H1 (cell line): ENCODE measurements at regions of chr19 and their contacts with region 1.

Region 1: DNA sequence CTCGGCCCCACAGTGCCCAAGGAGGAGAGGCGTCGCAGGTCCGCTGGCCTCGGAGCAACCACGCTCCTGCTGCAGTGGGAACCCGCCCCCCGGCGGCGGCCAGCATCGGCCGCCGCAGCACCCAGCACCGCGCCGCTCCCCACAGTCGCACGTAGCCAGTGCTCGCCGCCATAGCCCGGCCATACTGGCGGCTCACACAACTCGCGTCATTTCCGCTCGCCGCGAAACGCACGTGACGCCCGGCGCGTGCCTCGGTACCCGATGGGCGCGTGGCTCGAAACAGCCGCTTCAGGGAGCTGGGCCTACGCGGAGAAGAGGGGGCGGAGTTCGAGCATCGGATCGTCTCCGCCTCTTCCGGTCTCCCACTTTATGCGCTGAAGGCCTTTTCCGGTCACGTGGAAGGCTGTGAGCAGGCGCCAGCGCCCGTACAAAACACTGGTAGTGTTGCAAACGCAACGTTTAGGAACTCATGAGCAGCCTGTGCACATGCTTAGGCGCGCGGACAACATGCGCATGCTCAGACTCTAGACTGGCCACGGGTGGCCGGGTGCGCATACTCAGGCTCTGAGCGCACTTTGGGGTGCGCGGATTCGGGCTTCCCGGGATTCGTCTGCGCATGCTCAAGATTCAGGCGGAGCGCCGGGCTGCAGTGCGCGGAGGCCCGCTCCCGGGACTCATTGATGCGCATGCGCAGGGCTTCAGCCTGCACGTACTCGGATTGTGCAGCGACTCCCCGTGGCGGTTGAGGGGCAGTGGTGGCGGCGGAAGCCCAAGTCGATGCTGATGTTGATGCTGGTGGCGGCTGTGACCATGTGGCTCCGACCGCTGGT is at the starts of genes CATSPERD and LONP1:
- DNase-seq: peak; percentile 95 to 98
- H3K4me3 ChIP-seq: peak within 1 kb of the TSS; percentile 71 to 100 (median 98)
- H3K27ac ChIP-seq: peak within 1 kb of the TSS; percentile 97
- H3K4me1 ChIP-seq: no peaks in the 10 kb centered on the region; a peak in 2 of 7 replicates
- H3K27me3 ChIP-seq: no peaks in the 10 kb centered on the region
- CTCF ChIP-seq: peak; percentile 78 to 94 (median 91)
- EP300 ChIP-seq: peak in 1 of 2 experiments; percentile 59; a peak in 1 of 3 replicates
- POLR2A ChIP-seq: peak; percentile 85 to 91
- RAD21 ChIP-seq: peak in 1 of 2 experiments; percentile 33; a peak in 2 of 4 replicates
- total RNA-seq, gene CATSPERD: not detected in 2 replicates
- total RNA-seq, gene LONP1: 117 and 124 TPM in 2 replicates

Region 2: GRCh38 chr19:5622463-5623396 is 97.4 kb before region 1 on chr19 and contains the starts of genes SAFB and SAFB2:
- CTCF ChIA-PET with region 1: no interaction called
- POLR2A ChIA-PET with region 1: interaction called, 18 read pairs
- DNase-seq: peak; percentile 98 to 100
- H3K4me3 ChIP-seq: peak within 1 kb of the TSS; percentile 88 to 100 (median 98)
- H3K27ac ChIP-seq: peak within 1 kb of the TSS; percentile 97
- H3K4me1 ChIP-seq: peaks cover 2 to 14% (median 6%) of the 10 kb centered on the region in 4 experiments; a peak in 4 of 7 replicates
- H3K27me3 ChIP-seq: no peaks in the 10 kb centered on the region
- CTCF ChIP-seq: no peak
- EP300 ChIP-seq: no peak
- POLR2A ChIP-seq: peak; percentile 61 to 86; a peak in 2 of 3 replicates
- RAD21 ChIP-seq: no peak
- total RNA-seq, gene SAFB: 109 and 110 TPM in 2 replicates
- total RNA-seq, gene SAFB2: 63.8 and 74.4 TPM in 2 replicates

Region 3: GRCh38 chr19:5651361-5651760 is 68.8 kb before region 1 on chr19:
- CTCF ChIA-PET with region 1: no interaction called
- POLR2A ChIA-PET with region 1: no interaction called
- DNase-seq: no peak
- H3K4me3 ChIP-seq: no peak overlapping the region
- H3K27ac ChIP-seq: no peak overlapping the region
- H3K4me1 ChIP-seq: no peaks in the 10 kb centered on the region
- H3K27me3 ChIP-seq: no peaks in the 10 kb centered on the region
- CTCF ChIP-seq: peak in 2 of 3 experiments; percentile 8 to 23; a peak in 1 of 4 replicates
- EP300 ChIP-seq: no peak
- POLR2A ChIP-seq: no peak
- RAD21 ChIP-seq: no peak

Region 4: DNA sequence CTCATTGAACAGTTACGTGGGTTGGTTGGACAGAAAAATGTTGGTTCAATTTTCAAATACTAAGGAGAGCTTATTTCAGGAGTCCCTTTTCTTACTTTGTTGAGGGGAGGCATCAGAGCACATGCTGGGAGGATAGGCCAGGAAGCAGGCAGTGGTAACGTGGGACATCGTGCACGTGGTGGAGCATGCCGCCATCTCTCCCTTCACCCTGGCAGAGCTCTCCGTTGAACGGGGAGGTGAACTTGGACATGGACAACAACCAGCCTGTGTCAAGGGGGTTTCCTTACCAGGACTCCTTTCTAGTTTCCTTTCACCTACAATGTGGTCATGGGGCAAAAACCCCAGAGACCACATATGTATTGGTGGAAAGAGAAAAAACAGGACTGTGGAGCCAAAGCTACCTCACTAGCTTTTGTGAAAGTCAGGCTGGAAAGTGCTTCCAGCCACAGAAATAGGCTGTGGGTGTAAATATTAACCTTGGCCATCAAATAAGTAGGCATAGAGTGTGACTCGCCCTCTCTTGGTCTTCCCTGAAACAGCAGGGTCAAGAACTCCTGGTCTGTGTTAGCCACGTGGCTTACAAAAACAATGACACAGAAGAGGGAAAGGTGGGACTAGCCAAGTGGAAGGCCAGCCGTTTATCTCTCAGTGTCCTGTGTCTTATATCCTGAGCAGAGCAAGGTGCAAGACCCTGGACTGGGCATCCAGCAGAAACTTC is 54.2 kb before region 1 on chr19:
- CTCF ChIA-PET with region 1: no interaction called
- POLR2A ChIA-PET with region 1: no interaction called
- DNase-seq: no peak
- H3K4me3 ChIP-seq: no peak overlapping the region
- H3K27ac ChIP-seq: no peak overlapping the region
- H3K4me1 ChIP-seq: peaks cover 0 to 9% (median 5%) of the 10 kb centered on the region in 4 experiments; a peak in 5 of 7 replicates
- H3K27me3 ChIP-seq: no peaks in the 10 kb centered on the region
- CTCF ChIP-seq: peak in 1 of 3 experiments; percentile 15; a peak in 1 of 4 replicates
- EP300 ChIP-seq: no peak
- POLR2A ChIP-seq: no peak
- RAD21 ChIP-seq: no peak

Region 5: DNA sequence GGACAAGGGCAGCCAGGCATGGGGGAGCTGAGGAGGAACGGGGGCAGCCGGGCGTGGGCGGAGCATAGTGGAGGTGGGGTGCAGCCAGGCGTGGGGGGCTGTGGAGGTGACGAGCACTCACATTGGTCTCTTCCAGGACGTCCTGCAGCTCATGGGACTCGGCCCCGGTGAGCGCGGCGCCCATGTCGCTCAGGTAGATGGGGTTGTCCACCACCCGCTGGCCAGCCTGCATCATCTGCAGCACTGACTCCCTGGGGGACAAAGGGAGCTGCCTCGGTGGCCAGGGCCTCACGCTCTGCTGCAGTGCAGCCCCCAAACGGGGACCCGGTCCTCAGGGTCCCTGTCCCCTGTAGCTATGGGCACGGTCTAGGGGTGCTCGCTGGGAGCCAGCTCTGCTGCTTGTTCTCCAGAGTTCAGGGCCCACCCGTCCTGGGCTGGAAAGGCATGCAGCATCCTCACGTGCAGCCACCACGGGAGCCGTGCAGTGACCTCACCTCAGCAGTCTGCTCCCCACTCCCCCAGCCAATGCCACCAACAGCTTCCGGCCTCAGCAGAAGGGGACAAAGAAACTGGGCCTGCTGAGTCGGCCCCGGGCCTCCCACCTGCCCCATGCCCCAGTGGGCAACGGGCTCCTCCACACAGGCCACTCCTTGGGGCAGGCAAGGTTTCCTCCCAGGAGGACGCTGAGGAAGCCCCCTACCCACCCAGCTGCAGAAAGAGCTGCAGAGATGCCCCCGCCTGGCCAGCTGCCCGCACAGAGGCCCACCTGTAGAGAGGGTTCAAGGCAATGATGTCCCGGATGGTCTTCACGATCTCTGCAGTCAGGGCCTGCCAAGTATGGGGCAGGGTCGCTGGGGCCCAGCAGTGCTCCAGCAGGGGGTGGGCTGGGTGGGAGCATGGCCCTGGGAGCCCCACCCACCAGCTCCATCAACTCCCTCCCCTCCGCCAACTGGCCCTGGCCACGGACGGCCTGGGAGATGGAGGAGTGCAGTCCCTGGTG is 12.3 kb before region 1 on chr19:
- CTCF ChIA-PET with region 1: interaction called, 6 read pairs
- POLR2A ChIA-PET with region 1: interaction called, 50 read pairs
- DNase-seq: no peak
- H3K4me3 ChIP-seq: no peak overlapping the region
- H3K27ac ChIP-seq: no peak overlapping the region
- H3K4me1 ChIP-seq: no peaks in the 10 kb centered on the region
- H3K27me3 ChIP-seq: no peaks in the 10 kb centered on the region
- CTCF ChIP-seq: no peak
- EP300 ChIP-seq: no peak
- POLR2A ChIP-seq: no peak; a peak in 1 of 3 replicates
- RAD21 ChIP-seq: no peak

Region 6: GRCh38 chr19:5738426-5738825 is 18.2 kb after region 1 on chr19:
- CTCF ChIA-PET with region 1: interaction called, 7 read pairs
- POLR2A ChIA-PET with region 1: interaction called, 12 read pairs
- DNase-seq: no peak
- H3K4me3 ChIP-seq: no peak overlapping the region
- H3K27ac ChIP-seq: no peak overlapping the region
- H3K4me1 ChIP-seq: no peaks in the 10 kb centered on the region
- H3K27me3 ChIP-seq: no peaks in the 10 kb centered on the region
- CTCF ChIP-seq: no peak
- EP300 ChIP-seq: no peak
- POLR2A ChIP-seq: no peak
- RAD21 ChIP-seq: no peak

Region 7: DNA sequence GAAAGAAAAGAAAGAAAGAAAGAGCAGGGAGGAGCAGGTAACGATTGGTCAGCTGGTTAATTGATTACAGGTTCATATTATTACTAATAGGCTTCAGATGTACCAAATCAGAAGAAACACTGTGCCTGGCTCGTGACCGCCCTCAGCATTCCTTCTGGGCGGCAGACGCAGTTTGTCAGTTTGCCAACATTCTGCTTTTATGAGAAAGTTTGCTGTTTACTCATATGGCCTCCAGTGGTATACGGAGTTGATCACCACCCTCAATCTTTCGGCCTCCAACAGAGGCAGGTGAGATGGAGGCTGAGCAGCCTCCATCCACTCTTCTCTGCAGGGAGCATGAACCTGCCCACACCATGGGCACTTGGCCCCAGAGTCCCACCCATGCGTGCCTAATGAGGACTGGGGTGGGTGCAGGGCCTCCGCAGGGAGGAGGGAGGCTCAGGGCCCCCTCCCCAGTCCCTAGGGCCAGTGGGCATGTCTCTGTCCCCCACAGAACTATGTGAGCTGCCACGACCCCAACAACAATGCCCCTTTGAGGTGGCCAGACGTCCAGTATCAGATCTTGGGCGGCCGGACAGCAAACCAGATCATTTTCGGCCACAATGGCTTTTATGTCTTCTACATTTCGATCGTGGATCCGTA is 55.6 kb after region 1 on chr19:
- CTCF ChIA-PET with region 1: interaction called, 3 read pairs
- POLR2A ChIA-PET with region 1: interaction called, 25 read pairs
- DNase-seq: no peak
- H3K4me3 ChIP-seq: no peak overlapping the region
- H3K27ac ChIP-seq: no peak overlapping the region
- H3K4me1 ChIP-seq: no peaks in the 10 kb centered on the region
- H3K27me3 ChIP-seq: no peaks in the 10 kb centered on the region; a peak in 2 of 7 replicates
- CTCF ChIP-seq: no peak
- EP300 ChIP-seq: no peak
- POLR2A ChIP-seq: no peak
- RAD21 ChIP-seq: no peak

Region 8: DNA sequence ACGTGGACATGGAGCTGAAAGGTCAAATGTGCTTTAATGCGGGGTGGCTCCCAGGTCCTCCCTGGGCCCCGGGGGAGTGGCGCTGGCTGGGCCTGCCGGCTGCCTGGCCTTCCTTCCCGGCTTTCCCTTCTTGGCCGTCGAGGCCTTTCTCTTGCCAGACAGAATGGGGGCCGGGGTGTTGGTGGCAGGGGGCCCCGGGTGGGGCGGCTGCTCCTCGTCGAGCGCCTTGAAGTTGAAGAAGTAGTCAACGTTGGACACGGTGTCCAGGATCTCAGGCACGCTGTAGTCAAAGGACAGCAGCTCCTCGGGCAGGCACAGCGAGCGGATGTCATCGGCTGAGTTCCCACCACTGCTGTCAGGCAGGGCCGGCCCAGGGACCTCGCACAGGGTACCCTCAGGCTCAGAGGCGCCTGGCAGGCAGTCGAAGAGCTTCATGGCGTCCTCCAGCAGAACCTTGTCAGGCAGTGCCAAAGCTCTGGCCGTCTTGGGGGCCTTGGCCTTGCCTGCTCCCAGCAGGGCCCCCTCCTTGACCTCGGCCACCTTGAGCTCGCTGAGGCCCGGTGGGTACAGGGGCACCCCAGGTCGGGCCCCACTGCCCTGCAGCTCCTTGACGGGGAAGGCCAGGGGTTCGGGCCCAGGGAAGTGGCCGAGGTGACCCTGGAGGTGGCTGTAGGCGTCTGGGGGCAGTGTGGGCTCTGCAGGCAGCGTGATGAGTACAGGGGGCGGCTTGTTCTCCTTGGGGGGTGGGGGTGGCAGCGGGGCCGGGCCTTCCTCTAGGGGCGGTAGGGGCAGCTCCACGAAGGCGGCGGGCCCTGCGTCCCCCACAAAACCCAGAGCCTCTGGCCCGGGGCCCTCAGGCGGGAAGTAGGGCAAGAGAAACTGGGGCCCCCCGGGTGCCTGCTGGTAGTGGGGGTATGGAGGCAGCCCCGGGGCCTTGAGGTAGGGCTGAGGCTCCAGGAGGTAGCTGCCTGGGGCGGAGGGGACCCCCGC is 63.1 kb after region 1 on chr19:
- CTCF ChIA-PET with region 1: no interaction called
- POLR2A ChIA-PET with region 1: interaction called, 25 read pairs
- DNase-seq: no peak
- H3K4me3 ChIP-seq: no peak overlapping the region
- H3K27ac ChIP-seq: no peak overlapping the region
- H3K4me1 ChIP-seq: no peaks in the 10 kb centered on the region
- H3K27me3 ChIP-seq: no peaks in the 10 kb centered on the region
- CTCF ChIP-seq: no peak
- EP300 ChIP-seq: no peak
- POLR2A ChIP-seq: no peak
- RAD21 ChIP-seq: no peak

Region 9: GRCh38 chr19:5790573-5791520 is 70.7 kb after region 1 on chr19 and contains the start of gene DUS3L:
- CTCF ChIA-PET with region 1: interaction called, 4 read pairs
- POLR2A ChIA-PET with region 1: interaction called, 21 read pairs
- DNase-seq: peak; percentile 94 to 95
- H3K4me3 ChIP-seq: peak within 1 kb of the TSS; percentile 77 to 92 (median 82)
- H3K27ac ChIP-seq: peak within 1 kb of the TSS; percentile 91
- H3K4me1 ChIP-seq: no peaks in the 10 kb centered on the region; a peak in 1 of 7 replicates
- H3K27me3 ChIP-seq: no peaks in the 10 kb centered on the region
- CTCF ChIP-seq: no peak
- EP300 ChIP-seq: no peak
- POLR2A ChIP-seq: peak in 1 of 2 experiments; percentile 87; a peak in 2 of 3 replicates
- RAD21 ChIP-seq: no peak
- total RNA-seq, gene DUS3L: 39.1 and 39.4 TPM in 2 replicates